ENCODE measurements at regions of chr2 and their contacts with region 1.

Region 1: GRCh38 chr2:199739413-199740110 is 111.4 kb downstream of the FTCDNL1 start:
- DNase-seq: peak; percentile 50 to 63
- ATAC-seq: peak in 3 of 8 donors; percentile 37 to 57 (median 47)
- H3K4me3 ChIP-seq: no peak overlapping the region
- H3K27ac ChIP-seq: peak overlapping the region in 1 of 10 donors; percentile 10
- H3K4me1 ChIP-seq: peaks cover 0 to 13% (median 0%) of the 10 kb centered on the region in 9 donors
- H3K27me3 ChIP-seq: peaks cover 0 to 58% (median 9%) of the 10 kb centered on the region in 7 donors
- CTCF ChIP-seq: peak; percentile 84 to 95 (median 89)

Region 2: GRCh38 chr2:198326431-198326830 is 1413.1 kb before region 1 on chr2:
- intact Hi-C with region 1: loop called in 1 of 10 experiments (anchors 5 kb)
- DNase-seq: no peak
- ATAC-seq: no peak
- H3K4me3 ChIP-seq: no peak overlapping the region
- H3K27ac ChIP-seq: no peak overlapping the region
- H3K4me1 ChIP-seq: no peaks in the 10 kb centered on the region
- H3K27me3 ChIP-seq: peaks cover 0 to 26% (median 11%) of the 10 kb centered on the region in 7 donors
- CTCF ChIP-seq: no peak

Region 3: GRCh38 chr2:199488772-199489400 is 250.7 kb before region 1 on chr2:
- intact Hi-C with region 1: loop called in 1 of 10 experiments (anchors 10 kb)
- DNase-seq: peak in 1 of 2 donors; percentile 29
- ATAC-seq: no peak
- H3K4me3 ChIP-seq: no peak overlapping the region
- H3K27ac ChIP-seq: no peak overlapping the region
- H3K4me1 ChIP-seq: no peaks in the 10 kb centered on the region
- H3K27me3 ChIP-seq: peaks cover 0 to 56% (median 8%) of the 10 kb centered on the region in 7 donors
- CTCF ChIP-seq: peak; percentile 23 to 75 (median 62)

Region 4: DNA sequence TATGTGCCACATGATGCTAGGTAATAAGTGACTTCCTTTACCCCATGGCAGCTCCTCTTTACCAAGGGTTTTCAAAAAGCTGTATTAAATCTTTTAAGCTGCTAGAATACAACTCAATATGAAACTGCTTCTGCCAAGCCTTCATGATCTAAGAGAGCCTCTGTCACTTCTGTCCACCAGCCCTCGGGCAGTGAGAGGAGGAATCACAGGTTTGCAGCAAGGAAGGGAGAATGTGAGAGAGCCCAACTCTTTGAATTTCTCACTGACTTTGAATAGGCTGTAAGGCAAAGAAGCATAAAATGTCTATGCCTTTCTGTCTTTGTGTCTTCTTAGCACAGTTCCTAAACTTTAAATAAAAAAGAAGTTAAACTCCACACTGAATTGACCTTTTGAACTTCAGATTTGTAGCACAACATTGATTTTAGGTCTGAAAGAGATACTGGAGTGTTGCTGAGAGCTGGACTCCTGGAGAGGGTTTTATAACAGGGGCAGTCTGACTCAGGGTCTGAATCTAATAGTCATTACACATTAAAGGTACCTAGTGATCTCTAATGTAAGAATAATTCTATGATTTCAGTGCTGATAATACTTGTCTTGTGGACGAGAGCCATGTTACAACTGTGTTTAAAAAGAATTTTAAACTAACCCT is 233.7 kb before region 1 on chr2:
- intact Hi-C with region 1: no loop called
- DNase-seq: no peak
- ATAC-seq: no peak
- H3K4me3 ChIP-seq: no peak overlapping the region
- H3K27ac ChIP-seq: no peak overlapping the region
- H3K4me1 ChIP-seq: no peaks in the 10 kb centered on the region
- H3K27me3 ChIP-seq: peaks cover 0 to 37% (median 4%) of the 10 kb centered on the region in 7 donors
- CTCF ChIP-seq: no peak

Region 5: DNA sequence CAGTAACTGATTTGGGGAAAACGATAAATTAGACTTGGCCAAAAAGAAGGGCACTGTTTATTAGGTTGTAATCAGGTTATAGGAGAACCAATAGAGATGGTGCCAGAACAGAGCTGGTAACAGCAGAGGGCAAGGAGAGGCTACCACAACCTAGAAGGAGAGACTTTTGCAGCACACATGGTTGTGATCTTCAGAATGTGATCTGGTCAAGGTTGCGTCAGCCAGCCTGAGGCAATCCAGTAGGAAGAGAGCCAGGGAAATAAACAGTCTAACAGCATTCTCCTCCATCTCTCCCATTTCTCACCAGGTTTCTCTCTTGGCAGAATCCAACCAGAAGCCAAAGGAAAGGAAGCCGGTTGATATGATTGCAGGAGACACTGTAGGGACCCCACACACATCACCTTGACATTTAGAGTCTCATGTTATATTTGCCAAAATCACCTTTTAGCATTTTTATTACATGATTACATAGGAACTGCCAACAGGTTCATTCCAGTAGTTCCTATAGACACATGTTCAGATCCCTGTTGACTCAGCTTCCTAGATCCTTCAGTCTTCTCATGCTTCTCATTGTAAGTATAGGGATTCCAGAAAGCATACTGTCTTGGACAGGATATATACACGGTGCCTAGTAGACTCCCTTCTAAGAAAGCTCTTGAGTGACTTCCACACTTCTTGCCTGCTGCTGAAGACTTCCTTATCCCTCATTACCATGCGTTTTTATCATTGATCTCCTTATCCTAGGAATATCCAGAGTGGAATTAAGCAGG is 549.3 kb after region 1 on chr2:
- intact Hi-C with region 1: no loop called
- DNase-seq: no peak
- ATAC-seq: peak in 1 of 8 donors; percentile 37
- H3K4me3 ChIP-seq: no peak overlapping the region
- H3K27ac ChIP-seq: no peak overlapping the region
- H3K4me1 ChIP-seq: no peaks in the 10 kb centered on the region
- H3K27me3 ChIP-seq: no peaks in the 10 kb centered on the region
- CTCF ChIP-seq: no peak